ENCODE measurements at regions of chr18 and their contacts with region 1.

Region 1: DNA sequence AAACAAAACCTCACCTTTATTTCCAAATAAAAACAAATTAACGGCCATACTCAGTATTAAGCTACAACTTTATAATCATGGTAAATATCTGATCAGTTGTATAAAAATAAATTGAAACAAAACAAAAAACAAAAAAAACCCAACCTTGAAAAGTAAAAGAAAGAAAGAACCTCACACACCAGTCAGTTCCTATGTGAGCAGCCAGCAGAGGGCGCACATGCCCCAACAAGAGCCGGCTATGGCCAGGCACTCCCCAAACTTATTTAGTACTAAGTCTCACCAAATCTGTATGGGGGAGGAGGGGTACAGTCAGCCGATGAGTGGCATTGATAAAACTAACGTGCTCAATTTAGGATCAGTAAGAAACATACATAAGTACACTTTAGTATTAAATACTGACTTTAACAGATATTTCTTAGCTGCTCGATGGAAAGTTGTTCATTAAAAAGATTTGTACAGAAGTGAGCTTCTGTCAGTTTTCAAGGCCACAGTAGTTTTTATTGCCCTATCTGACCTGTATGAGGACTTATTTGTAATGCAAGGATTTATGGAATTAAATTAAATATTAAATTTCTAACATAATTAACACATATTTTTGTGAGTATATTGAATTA is 172.6 kb downstream of the TCF4 start:
- DNase-seq: peak; percentile 74
- ATAC-seq: peak; percentile 92
- H3K4me3 Mint-ChIP-seq: no peak overlapping the region
- H3K27ac Mint-ChIP-seq: peak overlapping the region; percentile 53
- H3K4me1 Mint-ChIP-seq: peaks cover 36% of the 10 kb centered on the region
- H3K27me3 Mint-ChIP-seq: no peaks in the 10 kb centered on the region
- CTCF ChIP-seq: peak; percentile 96

Region 2: DNA sequence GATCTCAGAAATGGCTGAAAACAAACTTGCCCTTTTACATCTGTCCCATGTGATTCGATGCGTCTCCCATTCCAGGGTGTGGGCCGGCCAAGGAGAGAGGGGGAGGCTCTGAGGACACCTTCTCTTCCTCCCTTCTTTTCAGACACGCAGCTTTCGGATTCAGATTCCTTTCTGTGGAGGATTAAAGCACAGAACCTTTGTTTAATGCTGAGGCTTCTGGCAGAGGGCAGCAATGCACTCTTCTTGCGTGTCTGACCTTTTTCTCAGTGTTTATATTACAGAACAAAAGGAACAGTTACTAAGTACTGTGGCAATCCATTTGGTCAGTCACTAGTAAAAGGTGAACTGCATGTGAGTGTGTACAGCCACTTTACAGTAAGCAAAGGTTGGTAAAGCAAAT is 187.2 kb before region 1 on chr18:
- CTCF ChIA-PET with region 1: no interaction called
- POLR2A ChIA-PET with region 1: no interaction called
- intact Hi-C with region 1: no loop called
- DNase-seq: no peak
- ATAC-seq: no peak
- H3K4me3 Mint-ChIP-seq: no peak overlapping the region
- H3K27ac Mint-ChIP-seq: peak overlapping the region; percentile 51
- H3K4me1 Mint-ChIP-seq: peaks cover 8% of the 10 kb centered on the region
- H3K27me3 Mint-ChIP-seq: no peaks in the 10 kb centered on the region
- CTCF ChIP-seq: no peak

Region 3: GRCh38 chr18:55376387-55376786 is 39.0 kb before region 1 on chr18:
- CTCF ChIA-PET with region 1: interaction called, 3 read pairs
- POLR2A ChIA-PET with region 1: no interaction called
- intact Hi-C with region 1: loop called (anchors 5 kb)
- DNase-seq: no peak
- ATAC-seq: peak; percentile 91
- H3K4me3 Mint-ChIP-seq: peak overlapping the region; percentile 13
- H3K27ac Mint-ChIP-seq: peak overlapping the region; percentile 87
- H3K4me1 Mint-ChIP-seq: peaks cover 41% of the 10 kb centered on the region
- H3K27me3 Mint-ChIP-seq: no peaks in the 10 kb centered on the region
- CTCF ChIP-seq: no peak

Region 4: GRCh38 chr18:55743736-55744135 is 328.4 kb after region 1 on chr18:
- CTCF ChIA-PET with region 1: no interaction called
- POLR2A ChIA-PET with region 1: no interaction called
- intact Hi-C with region 1: no loop called
- DNase-seq: no peak
- ATAC-seq: no peak
- H3K4me3 Mint-ChIP-seq: no peak overlapping the region
- H3K27ac Mint-ChIP-seq: no peak overlapping the region
- H3K4me1 Mint-ChIP-seq: no peaks in the 10 kb centered on the region
- H3K27me3 Mint-ChIP-seq: no peaks in the 10 kb centered on the region
- CTCF ChIP-seq: no peak

Region 5: GRCh38 chr18:55861266-55861665 is 445.9 kb after region 1 on chr18:
- CTCF ChIA-PET with region 1: no interaction called
- POLR2A ChIA-PET with region 1: interaction called, 4 read pairs
- intact Hi-C with region 1: loop called (anchors 1 kb)
- DNase-seq: no peak
- ATAC-seq: no peak
- H3K4me3 Mint-ChIP-seq: no peak overlapping the region
- H3K27ac Mint-ChIP-seq: no peak overlapping the region
- H3K4me1 Mint-ChIP-seq: no peaks in the 10 kb centered on the region
- H3K27me3 Mint-ChIP-seq: peaks cover 10% of the 10 kb centered on the region
- CTCF ChIP-seq: no peak

Region 6: DNA sequence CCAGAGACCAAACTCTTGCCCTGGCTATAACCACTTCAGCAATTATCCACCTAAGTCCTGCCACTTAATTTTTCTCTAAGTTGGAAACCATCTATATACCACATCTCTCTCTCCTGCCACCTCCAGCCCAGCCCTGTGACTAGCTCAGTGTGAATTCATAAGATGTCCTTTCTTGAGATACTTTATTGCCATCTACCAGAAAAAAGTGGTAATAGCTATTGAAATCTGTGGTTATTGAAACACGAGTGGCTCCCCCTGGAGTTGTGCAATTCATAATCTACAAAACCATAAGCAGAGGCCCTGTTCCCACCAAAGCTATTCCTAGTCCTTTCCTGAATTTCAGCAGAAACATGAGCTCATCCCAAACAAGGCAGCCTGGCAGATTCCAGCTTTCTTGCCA is 899.0 kb after region 1 on chr18:
- CTCF ChIA-PET with region 1: interaction called, 8 read pairs
- POLR2A ChIA-PET with region 1: no interaction called
- intact Hi-C with region 1: loop called (anchors 1 kb)
- DNase-seq: no peak
- ATAC-seq: peak; percentile 47
- H3K4me3 Mint-ChIP-seq: no peak overlapping the region
- H3K27ac Mint-ChIP-seq: no peak overlapping the region
- H3K4me1 Mint-ChIP-seq: peaks cover 23% of the 10 kb centered on the region
- H3K27me3 Mint-ChIP-seq: no peaks in the 10 kb centered on the region
- CTCF ChIP-seq: no peak

Region 7: GRCh38 chr18:56575819-56576663 is 1160.7 kb after region 1 on chr18:
- CTCF ChIA-PET with region 1: interaction called, 35 read pairs
- POLR2A ChIA-PET with region 1: no interaction called
- intact Hi-C with region 1: loop called (anchors 1 kb)
- DNase-seq: no peak
- ATAC-seq: peak; percentile 64
- H3K4me3 Mint-ChIP-seq: no peak overlapping the region
- H3K27ac Mint-ChIP-seq: no peak overlapping the region
- H3K4me1 Mint-ChIP-seq: no peaks in the 10 kb centered on the region
- H3K27me3 Mint-ChIP-seq: peaks cover 5% of the 10 kb centered on the region
- CTCF ChIP-seq: no peak

Region 8: DNA sequence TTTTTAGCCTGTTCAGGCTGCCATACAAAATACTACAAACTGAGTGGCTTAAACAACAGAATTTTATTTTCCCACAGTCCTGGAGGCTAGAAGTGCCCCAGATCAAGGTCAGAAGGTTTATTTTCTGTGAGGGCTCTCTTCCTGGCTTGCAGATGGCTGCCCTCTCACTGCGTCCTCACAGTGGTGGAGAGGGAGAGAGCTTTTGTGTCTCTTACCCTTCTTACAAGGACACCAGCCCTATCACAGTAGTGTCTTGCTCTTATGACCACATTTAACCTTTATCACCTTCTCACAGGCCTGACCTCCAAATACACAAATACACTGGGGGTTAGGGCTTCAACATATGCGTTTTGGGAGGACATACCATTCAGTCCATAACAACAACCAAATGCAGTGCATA is 1247.5 kb after region 1 on chr18:
- CTCF ChIA-PET with region 1: no interaction called
- POLR2A ChIA-PET with region 1: no interaction called
- intact Hi-C with region 1: no loop called
- DNase-seq: no peak
- ATAC-seq: no peak
- H3K4me3 Mint-ChIP-seq: no peak overlapping the region
- H3K27ac Mint-ChIP-seq: no peak overlapping the region
- H3K4me1 Mint-ChIP-seq: peaks cover 2% of the 10 kb centered on the region
- H3K27me3 Mint-ChIP-seq: no peaks in the 10 kb centered on the region
- CTCF ChIP-seq: no peak

Measured in activated B cell treated with CpG ODN at 0.5 μM for 24 hours (primary cell).